Activated T-helper 2 cell treated with anti-CD3 and anti-CD28 coated beads, Interferon-gamma antibody, Interleukin-2, Interleukin-4, amounts not matched to agents 10 μg/mL and 5 μg/mL and 100 μg/mL, durations not matched to agents 14 hours and 24 hours and 36 hours (primary cell): ENCODE measurements at regions of chr6 and their contacts with region 1.

Region 1: DNA sequence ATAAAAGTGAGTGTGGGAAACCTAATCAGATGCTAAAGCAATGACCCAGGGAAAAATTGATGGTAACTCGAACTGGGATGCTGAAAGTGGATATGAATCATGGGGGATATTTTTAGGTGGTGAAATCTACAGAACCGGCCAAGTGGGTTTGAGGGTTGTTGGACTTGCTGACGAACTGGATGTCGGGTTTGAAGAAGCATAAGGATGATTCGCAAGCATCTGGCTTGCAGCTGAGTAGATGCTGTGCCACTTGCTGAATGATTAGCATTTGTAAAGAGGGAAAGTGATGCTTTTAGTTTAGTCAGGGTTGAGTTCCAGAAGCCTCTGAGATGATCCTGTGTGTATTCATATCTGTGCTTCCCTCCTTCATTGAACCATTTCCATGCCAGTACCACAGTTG is 54.9 kb downstream of the UBR2 start:
- DNase-seq: no peak
- H3K4me3 Mint-ChIP-seq: no peak overlapping the region
- H3K27ac Mint-ChIP-seq: no peak overlapping the region
- H3K4me1 Mint-ChIP-seq: peaks cover 22% of the 10 kb centered on the region
- H3K27me3 Mint-ChIP-seq: no peaks in the 10 kb centered on the region

Region 2: DNA sequence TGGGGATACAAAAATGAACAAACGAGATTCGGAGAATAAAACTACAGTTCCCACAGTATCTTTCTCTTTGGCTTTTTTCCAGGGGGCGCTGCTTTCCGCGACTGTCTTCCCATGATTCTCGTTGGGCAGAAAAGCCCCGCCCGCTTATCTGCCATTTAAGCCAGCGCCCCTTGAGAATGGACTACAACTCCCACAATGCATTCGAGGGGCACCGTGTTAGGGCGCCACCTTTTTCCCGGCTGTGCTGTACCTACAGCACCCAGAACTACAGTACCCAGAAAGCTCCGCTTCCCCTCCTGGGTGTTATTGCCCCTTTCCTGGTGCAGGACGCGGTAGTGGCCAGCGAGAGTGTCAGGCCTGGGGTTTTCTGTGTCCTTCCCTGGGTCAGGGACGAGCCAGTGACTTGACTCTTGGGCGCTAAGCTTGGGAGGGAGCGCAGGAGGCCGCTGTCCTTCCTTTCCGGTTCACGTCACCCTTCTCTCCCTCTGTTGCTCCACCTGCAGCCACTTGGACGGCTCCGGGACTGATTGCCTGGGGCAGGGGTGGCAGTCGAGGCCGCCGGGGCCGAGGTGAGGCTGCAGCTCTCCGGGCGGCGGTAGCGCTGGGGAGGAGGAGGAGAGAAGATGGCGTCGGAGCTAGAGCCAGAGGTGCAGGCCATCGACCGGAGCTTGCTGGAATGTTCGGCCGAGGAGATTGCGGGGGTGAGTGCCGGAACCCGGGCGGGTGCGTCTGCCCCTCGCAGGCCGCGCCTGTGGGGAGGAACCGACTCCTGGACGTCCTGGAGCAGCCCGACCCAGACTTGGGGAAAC is 54.8 kb before region 1 on chr6 and contains the start of gene UBR2:
- intact Hi-C with region 1: loop called (anchors 10 kb)
- DNase-seq: peak; percentile 91
- H3K4me3 Mint-ChIP-seq: peak within 1 kb of the TSS; percentile 93
- H3K27ac Mint-ChIP-seq: peak within 1 kb of the TSS; percentile 87
- H3K4me1 Mint-ChIP-seq: peaks cover 26% of the 10 kb centered on the region
- H3K27me3 Mint-ChIP-seq: peaks cover 2% of the 10 kb centered on the region
- total RNA-seq, gene UBR2: 28.6 and 29.6 TPM in 2 replicates

Region 3: GRCh38 chr6:42637681-42638080 is 19.0 kb after region 1 on chr6:
- intact Hi-C with region 1: loop called (anchors 2 kb)
- DNase-seq: no peak
- H3K4me3 Mint-ChIP-seq: peak overlapping the region; percentile 3
- H3K27ac Mint-ChIP-seq: peak overlapping the region; percentile 63
- H3K4me1 Mint-ChIP-seq: peaks cover 22% of the 10 kb centered on the region
- H3K27me3 Mint-ChIP-seq: no peaks in the 10 kb centered on the region